Heart left ventricle (tissue), 16 donors: ENCODE measurements at regions of chr5 and their contacts with region 1.

Region 1: DNA sequence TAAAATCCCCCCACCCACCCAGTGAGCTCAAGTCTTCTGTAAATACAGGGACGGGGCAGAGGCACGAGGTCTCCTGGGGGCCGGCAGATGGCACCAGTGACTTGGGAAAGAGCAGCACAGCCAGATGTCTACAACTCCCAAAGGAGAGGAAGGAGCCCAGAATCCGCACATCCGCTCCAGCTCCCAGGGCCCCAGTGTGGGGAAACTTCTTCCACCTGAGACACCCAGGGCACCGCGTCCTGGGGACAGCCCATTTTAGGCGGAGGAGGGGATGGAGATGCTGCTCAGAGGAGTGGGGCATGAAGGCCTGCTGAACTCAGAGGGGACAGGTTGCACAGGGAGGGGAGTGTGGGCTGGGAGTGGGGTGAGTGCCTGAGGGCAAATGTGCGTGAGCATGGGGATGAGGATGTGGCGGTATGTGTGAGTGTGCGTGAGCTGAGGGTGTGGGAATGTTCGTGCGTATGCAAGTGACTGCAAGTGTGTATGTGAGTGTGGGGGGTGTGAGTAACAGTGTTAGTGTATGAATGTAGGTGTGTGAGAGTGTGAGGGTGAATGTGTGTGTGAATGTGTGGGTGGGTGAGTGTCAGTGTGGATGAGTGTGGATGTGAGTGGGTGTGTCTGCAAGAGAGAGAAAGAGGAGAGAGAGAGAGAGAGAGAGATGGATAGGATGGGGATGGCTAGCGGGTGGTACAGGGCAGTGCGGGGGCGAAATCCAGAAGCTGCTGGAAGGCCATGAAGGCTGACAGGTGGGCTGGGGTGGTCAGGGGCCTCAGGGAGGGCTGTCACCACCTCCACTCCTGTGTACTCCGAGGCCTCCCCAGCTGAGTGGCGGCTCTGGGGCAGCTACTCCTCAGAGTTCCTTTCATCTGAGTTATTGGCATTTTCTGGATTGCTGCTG is 63.5 kb downstream of the DUSP1 start:
- DNase-seq: peak in 2 of 5 donors; percentile 57 to 65
- ATAC-seq: peak; percentile 28 to 78 (median 76)
- H3K4me3 ChIP-seq: no peak overlapping the region
- H3K27ac ChIP-seq: no peak overlapping the region
- H3K4me1 ChIP-seq: no peaks in the 10 kb centered on the region
- H3K27me3 ChIP-seq: no peaks in the 10 kb centered on the region
- CTCF ChIP-seq: peak; percentile 13 to 54 (median 40)
- POLR2A ChIP-seq: no peak

Region 2: GRCh38 chr5:171939951-171940350 is 767.6 kb before region 1 on chr5:
- intact Hi-C with region 1: no loop called
- DNase-seq: no peak
- ATAC-seq: no peak
- H3K4me3 ChIP-seq: no peak overlapping the region
- H3K27ac ChIP-seq: peak overlapping the region in 4 of 12 donors; percentile 15 to 50 (median 25)
- H3K4me1 ChIP-seq: peaks cover 0 to 38% (median 27%) of the 10 kb centered on the region in 12 donors
- H3K27me3 ChIP-seq: no peaks in the 10 kb centered on the region
- CTCF ChIP-seq: no peak
- POLR2A ChIP-seq: no peak

Region 3: GRCh38 chr5:173155912-173156311 is 448.4 kb after region 1 on chr5:
- intact Hi-C with region 1: loop called in 1 of 10 experiments (anchors 10 kb)
- DNase-seq: no peak
- ATAC-seq: no peak
- H3K4me3 ChIP-seq: no peak overlapping the region
- H3K27ac ChIP-seq: no peak overlapping the region
- H3K4me1 ChIP-seq: no peaks in the 10 kb centered on the region
- H3K27me3 ChIP-seq: no peaks in the 10 kb centered on the region
- CTCF ChIP-seq: no peak
- POLR2A ChIP-seq: no peak

Region 4: GRCh38 chr5:173204185-173204979 is 496.8 kb after region 1 on chr5:
- intact Hi-C with region 1: loop called in 1 of 10 experiments (anchors 10 kb)
- DNase-seq: no peak
- ATAC-seq: no peak
- H3K4me3 ChIP-seq: no peak overlapping the region
- H3K27ac ChIP-seq: no peak overlapping the region
- H3K4me1 ChIP-seq: no peaks in the 10 kb centered on the region
- H3K27me3 ChIP-seq: peaks cover 0 to 35% (median 0%) of the 10 kb centered on the region in 9 donors
- CTCF ChIP-seq: peak in 11 of 12 donors; percentile 28 to 56 (median 49)
- POLR2A ChIP-seq: no peak